Activated CD4-positive, alpha-beta T cell treated with anti-CD3 and anti-CD28 coated beads, Interleukin-2, amount 10 ng/mL, durations not matched to agents 24 days and 14 days (primary cell): ENCODE measurements at regions of chr1 and their contacts with region 1.

Region 1: GRCh38 chr1:222455188-222455879 is 92.6 kb downstream of the HHIPL2 start:
- DNase-seq: peak; percentile 94
- H3K4me3 Mint-ChIP-seq: no peak overlapping the region
- H3K27ac Mint-ChIP-seq: no peak overlapping the region
- H3K4me1 Mint-ChIP-seq: peaks cover 6% of the 10 kb centered on the region
- H3K27me3 Mint-ChIP-seq: no peaks in the 10 kb centered on the region

Region 2: GRCh38 chr1:222064388-222065211 is 390.7 kb before region 1 on chr1:
- intact Hi-C with region 1: no loop called
- DNase-seq: no peak
- H3K4me3 Mint-ChIP-seq: no peak overlapping the region
- H3K27ac Mint-ChIP-seq: no peak overlapping the region
- H3K4me1 Mint-ChIP-seq: no peaks in the 10 kb centered on the region
- H3K27me3 Mint-ChIP-seq: no peaks in the 10 kb centered on the region

Region 3: DNA sequence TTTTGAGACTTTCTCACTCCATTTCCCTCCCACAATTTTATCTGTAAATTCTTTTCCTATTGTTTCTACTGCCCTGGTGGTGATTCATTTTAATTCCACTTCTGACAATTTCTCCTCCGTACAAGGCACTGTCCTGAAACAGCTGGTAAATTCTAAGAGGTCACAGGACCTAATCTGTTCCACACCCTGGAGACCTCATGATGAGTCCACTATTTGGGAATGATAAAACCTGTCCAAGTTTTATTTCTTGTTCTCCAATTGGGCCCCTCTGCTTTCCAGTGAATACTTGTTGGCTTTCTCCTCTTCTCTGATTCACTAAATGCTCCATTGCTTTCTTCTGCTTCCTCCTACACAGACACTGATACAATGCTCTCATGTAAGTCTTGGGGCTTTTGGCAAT is 370.3 kb before region 1 on chr1:
- intact Hi-C with region 1: no loop called
- DNase-seq: no peak
- H3K4me3 Mint-ChIP-seq: no peak overlapping the region
- H3K27ac Mint-ChIP-seq: no peak overlapping the region
- H3K4me1 Mint-ChIP-seq: no peaks in the 10 kb centered on the region
- H3K27me3 Mint-ChIP-seq: no peaks in the 10 kb centered on the region

Region 4: DNA sequence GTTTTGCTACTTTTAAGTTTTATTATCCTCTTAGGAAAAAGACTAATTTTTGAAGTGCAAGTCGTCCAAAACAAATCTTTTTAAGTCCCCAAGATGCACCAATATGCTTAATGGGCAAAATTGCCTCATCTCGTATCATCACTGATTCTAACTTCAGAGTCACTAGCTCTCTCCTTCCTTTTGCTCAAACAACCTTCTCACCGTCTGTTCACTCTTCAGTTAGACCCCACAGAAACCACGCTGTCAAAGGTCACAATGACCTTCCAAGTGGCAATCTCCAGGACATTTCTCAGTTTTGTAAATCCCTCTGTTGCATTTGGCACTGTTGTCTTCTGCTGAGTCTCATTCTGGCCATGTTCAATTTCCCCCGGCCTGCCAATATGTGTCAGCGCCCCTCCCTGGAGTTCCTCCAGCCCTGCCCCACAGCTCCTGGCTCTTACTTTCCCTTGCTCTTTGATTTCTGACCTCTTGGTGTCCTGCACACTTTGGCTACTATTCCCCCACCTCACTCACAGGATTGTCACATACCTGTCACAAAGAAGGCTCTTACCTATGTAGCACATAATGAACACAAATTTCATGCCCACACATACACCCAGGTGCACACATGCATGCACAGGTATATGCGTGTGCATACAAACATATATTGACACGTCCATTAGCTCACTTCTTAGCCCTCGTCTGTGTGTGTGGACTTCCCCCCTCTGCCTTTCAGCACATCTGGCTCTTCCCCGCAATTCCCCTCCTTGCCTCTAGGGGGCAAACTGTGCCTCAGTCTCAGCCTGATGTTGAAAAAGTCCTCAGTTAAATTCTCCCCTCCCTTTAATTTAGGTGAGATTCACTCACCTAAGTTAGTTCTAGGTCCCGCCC is 359.5 kb before region 1 on chr1:
- intact Hi-C with region 1: loop called (anchors 1 kb)
- DNase-seq: peak; percentile 86
- H3K4me3 Mint-ChIP-seq: no peak overlapping the region
- H3K27ac Mint-ChIP-seq: no peak overlapping the region
- H3K4me1 Mint-ChIP-seq: no peaks in the 10 kb centered on the region
- H3K27me3 Mint-ChIP-seq: peaks cover 3% of the 10 kb centered on the region